Calu3 (cell line): ENCODE measurements at regions of chr2 and their contacts with region 1.

Region 1: GRCh38 chr2:68751397-68752339 is 17.1 kb downstream of the ARHGAP25 start:
- DNase-seq: peak; percentile 90
- H3K4me3 Mint-ChIP-seq: no peak overlapping the region
- H3K27ac Mint-ChIP-seq: no peak overlapping the region
- H3K4me1 Mint-ChIP-seq: peaks cover 9% of the 10 kb centered on the region
- H3K27me3 Mint-ChIP-seq: peaks cover 48% of the 10 kb centered on the region
- CTCF ChIP-seq: peak; percentile 82

Region 2: DNA sequence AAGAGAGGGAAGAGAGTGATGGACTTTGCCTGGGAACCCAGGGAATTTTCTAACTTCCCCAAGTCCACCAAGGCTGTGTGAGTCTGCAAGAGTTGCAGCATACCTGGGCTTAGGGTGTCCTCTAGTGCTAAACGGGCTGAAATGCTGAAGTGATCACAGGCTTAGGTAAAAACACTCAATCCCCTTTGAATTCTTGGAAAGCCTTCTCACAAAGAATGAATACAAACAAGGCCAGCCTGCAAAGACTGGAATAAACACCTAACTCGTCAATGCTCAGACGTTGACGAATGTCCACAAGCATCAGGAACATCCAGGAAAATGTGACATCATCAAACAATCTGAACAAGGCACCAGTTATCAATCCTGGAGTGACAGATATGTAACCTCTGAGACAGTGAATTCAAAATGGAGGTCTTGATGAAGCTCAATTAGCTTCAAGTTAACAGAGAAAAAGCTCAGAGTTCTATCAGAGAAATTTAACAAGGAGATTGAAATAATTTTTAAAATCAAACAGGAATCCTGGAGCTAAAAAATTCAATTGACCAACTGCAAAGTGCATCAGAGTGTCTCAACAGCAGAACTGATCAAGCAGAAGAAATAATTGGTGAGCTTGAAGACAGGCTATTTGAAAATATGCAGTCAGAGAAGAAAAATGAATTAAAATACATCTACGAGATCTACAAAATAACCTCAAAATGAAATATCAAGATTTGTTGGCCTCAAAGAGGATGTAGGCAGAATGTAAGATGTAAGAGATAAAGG is 149.7 kb after region 1 on chr2:
- CTCF ChIA-PET with region 1: interaction called, 4 read pairs
- intact Hi-C with region 1: loop called (anchors 2 kb)
- DNase-seq: peak; percentile 31
- H3K4me3 Mint-ChIP-seq: no peak overlapping the region
- H3K27ac Mint-ChIP-seq: no peak overlapping the region
- H3K4me1 Mint-ChIP-seq: peaks cover under 1% of the 10 kb centered on the region
- H3K27me3 Mint-ChIP-seq: peaks cover 69% of the 10 kb centered on the region
- CTCF ChIP-seq: no peak

Region 3: GRCh38 chr2:68909793-68910674 is 158.4 kb after region 1 on chr2:
- CTCF ChIA-PET with region 1: interaction called, 28 read pairs
- intact Hi-C with region 1: no loop called
- DNase-seq: peak; percentile 75
- H3K4me3 Mint-ChIP-seq: no peak overlapping the region
- H3K27ac Mint-ChIP-seq: peak overlapping the region; percentile 9
- H3K4me1 Mint-ChIP-seq: peaks cover 34% of the 10 kb centered on the region
- H3K27me3 Mint-ChIP-seq: no peaks in the 10 kb centered on the region
- CTCF ChIP-seq: peak; percentile 85

Region 4: DNA sequence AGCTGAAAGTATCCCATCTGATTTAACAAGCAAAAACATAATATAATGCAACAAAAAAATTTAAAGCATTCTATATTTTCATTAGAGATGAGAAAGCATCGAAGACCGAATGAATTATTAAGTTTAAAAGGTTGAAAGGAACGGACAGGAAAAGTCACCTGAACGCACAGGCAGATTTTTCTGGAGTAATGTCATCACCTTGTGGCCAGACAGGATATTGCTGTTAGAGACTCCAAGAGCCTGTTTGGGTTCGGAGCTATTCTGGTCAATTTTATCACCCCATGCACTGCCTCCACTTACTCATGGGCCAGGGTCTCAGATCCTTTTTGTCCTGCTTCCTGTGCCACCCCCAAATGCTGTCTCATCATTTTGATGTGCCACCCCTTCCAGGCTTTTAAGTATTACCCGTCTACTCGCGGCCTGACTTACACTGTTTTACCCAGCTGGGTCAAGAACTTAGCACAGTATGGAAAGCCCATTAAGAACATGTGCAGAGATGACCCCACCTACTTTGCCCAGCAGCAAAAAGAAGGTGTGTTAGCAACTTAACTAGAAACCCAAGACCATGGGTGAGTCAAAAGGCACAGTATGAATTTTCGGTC is 173.7 kb after region 1 on chr2:
- CTCF ChIA-PET with region 1: interaction called, 23 read pairs
- intact Hi-C with region 1: loop called (anchors 1 kb)
- DNase-seq: peak; percentile 55
- H3K4me3 Mint-ChIP-seq: no peak overlapping the region
- H3K27ac Mint-ChIP-seq: no peak overlapping the region
- H3K4me1 Mint-ChIP-seq: peaks cover 15% of the 10 kb centered on the region
- H3K27me3 Mint-ChIP-seq: peaks cover 41% of the 10 kb centered on the region
- CTCF ChIP-seq: peak; percentile 84